Natural killer cell (primary cell): ENCODE measurements at regions of chr3 and their contacts with region 1.

Region 1: GRCh38 chr3:133573054-133573628 is 345 bp upstream of the CDV3 start:
- DNase-seq: peak; percentile 100
- ATAC-seq: peak; percentile 77 to 91 (median 79)
- H3K4me3 ChIP-seq: peak overlapping the region; percentile 38
- H3K4me3 Mint-ChIP-seq: peak overlapping the region; percentile 87
- H3K27ac ChIP-seq: peak overlapping the region; percentile 92
- H3K27ac Mint-ChIP-seq: peak overlapping the region; percentile 99
- H3K4me1 ChIP-seq: peaks cover 22% of the 10 kb centered on the region
- H3K4me1 Mint-ChIP-seq: peaks cover 40 to 53% of the 10 kb centered on the region in 2 donors
- H3K27me3 ChIP-seq: no peaks in the 10 kb centered on the region
- H3K27me3 Mint-ChIP-seq: no peaks in the 10 kb centered on the region
- CTCF ChIP-seq: no peak

Region 2: GRCh38 chr3:132416807-132417694 is 1156.1 kb before region 1 on chr3 and contains the start of gene DNAJC13:
- intact Hi-C with region 1: loop called (anchors 2 kb)
- DNase-seq: peak; percentile 85 to 97
- ATAC-seq: peak; percentile 92 to 97 (median 94)
- H3K4me3 ChIP-seq: peak within 1 kb of the TSS; percentile 98
- H3K4me3 Mint-ChIP-seq: peak within 1 kb of the TSS; percentile 99
- H3K27ac ChIP-seq: peak within 1 kb of the TSS; percentile 82
- H3K27ac Mint-ChIP-seq: peak within 1 kb of the TSS; percentile 84 to 95
- H3K4me1 ChIP-seq: peaks cover 10% of the 10 kb centered on the region
- H3K4me1 Mint-ChIP-seq: peaks cover 15 to 22% of the 10 kb centered on the region in 2 donors
- H3K27me3 ChIP-seq: no peaks in the 10 kb centered on the region
- H3K27me3 Mint-ChIP-seq: peaks cover 1 to 4% of the 10 kb centered on the region in 2 donors
- CTCF ChIP-seq: no peak
- total RNA-seq, gene DNAJC13: 30.5 to 44.0 (median 42.9) TPM

Region 3: DNA sequence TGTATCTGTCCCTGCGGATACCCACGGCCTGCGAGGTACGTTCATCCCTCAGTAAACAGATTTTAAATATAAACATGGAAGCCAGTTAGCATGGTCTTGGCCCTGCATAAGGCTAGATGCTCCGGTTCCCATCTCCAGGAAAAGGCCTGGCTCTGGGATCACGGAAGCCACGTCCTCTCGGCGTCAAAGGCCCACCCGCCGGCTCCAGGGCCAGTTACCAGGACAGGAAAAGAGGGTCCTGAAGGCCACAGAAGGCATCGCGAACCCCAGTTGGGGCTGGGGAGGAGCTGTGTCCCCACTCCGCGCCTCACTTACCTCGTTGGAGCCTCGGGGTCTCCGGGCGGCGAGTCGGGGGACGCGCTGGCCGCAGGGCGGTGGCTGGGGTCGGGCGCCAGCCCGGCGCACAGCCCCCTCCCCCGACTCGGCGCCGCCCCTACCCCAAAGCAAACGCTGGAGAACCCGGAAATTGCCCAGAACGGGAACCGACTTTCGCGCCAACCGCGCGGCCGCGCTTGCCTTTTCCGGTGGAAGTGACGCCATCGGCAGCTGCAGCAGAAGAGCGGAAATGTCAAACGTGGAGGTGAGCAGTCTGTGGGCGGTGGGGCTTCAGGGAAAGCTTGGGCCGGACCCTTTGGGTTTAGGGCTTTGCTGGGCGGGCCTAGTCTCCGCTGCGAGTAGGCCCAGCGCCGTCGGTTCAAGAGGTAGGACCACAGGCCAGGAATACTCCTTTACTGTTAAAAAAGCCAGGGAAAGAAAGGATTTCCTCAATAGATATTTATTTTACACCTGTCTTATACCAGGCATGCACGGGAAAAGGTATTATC is 88.5 kb after region 1 on chr3 and contains the start of gene TOPBP1:
- intact Hi-C with region 1: loop called (anchors 1 kb)
- DNase-seq: peak; percentile 76 to 93
- ATAC-seq: peak; percentile 81 to 93 (median 89)
- H3K4me3 ChIP-seq: peak within 1 kb of the TSS; percentile 79
- H3K4me3 Mint-ChIP-seq: peak within 1 kb of the TSS; percentile 97
- H3K27ac ChIP-seq: peak within 1 kb of the TSS; percentile 74
- H3K27ac Mint-ChIP-seq: peak within 1 kb of the TSS; percentile 95 to 97
- H3K4me1 ChIP-seq: peaks cover 15% of the 10 kb centered on the region
- H3K4me1 Mint-ChIP-seq: peaks cover 40 to 43% of the 10 kb centered on the region in 2 donors
- H3K27me3 ChIP-seq: no peaks in the 10 kb centered on the region
- H3K27me3 Mint-ChIP-seq: no peaks in the 10 kb centered on the region
- CTCF ChIP-seq: no peak
- total RNA-seq, gene TOPBP1: 48.1 to 52.9 (median 50.9) TPM

Region 4: GRCh38 chr3:134485718-134486576 is 912.8 kb after region 1 on chr3 and contains the starts of genes ANAPC13 and CEP63:
- intact Hi-C with region 1: loop called (anchors 1 kb)
- DNase-seq: peak; percentile 91 to 98
- ATAC-seq: peak; percentile 79 to 92 (median 84)
- H3K4me3 ChIP-seq: peak within 1 kb of the TSS; percentile 86
- H3K4me3 Mint-ChIP-seq: peak within 1 kb of the TSS; percentile 99
- H3K27ac ChIP-seq: peak within 1 kb of the TSS; percentile 95
- H3K27ac Mint-ChIP-seq: peak within 1 kb of the TSS; percentile 98 to 99
- H3K4me1 ChIP-seq: peaks cover 23% of the 10 kb centered on the region
- H3K4me1 Mint-ChIP-seq: peaks cover 41 to 53% of the 10 kb centered on the region in 2 donors
- H3K27me3 ChIP-seq: no peaks in the 10 kb centered on the region
- H3K27me3 Mint-ChIP-seq: no peaks in the 10 kb centered on the region
- CTCF ChIP-seq: no peak
- total RNA-seq, gene ANAPC13: 16.1 to 20.4 (median 16.6) TPM
- total RNA-seq, gene CEP63: 17.9 to 25.7 (median 19.5) TPM